ENCODE measurements at regions of chr10 and their contacts with region 1.

Region 1: GRCh38 chr10:31083765-31084184 is 52.1 kb upstream of the ZNF438 start:
- DNase-seq: no peak
- ATAC-seq: peak; percentile 64
- H3K4me3 Mint-ChIP-seq: no peak overlapping the region
- H3K27ac Mint-ChIP-seq: no peak overlapping the region
- H3K4me1 Mint-ChIP-seq: no peaks in the 10 kb centered on the region
- H3K27me3 Mint-ChIP-seq: peaks cover 5% of the 10 kb centered on the region
- CTCF ChIP-seq: no peak

Region 2: DNA sequence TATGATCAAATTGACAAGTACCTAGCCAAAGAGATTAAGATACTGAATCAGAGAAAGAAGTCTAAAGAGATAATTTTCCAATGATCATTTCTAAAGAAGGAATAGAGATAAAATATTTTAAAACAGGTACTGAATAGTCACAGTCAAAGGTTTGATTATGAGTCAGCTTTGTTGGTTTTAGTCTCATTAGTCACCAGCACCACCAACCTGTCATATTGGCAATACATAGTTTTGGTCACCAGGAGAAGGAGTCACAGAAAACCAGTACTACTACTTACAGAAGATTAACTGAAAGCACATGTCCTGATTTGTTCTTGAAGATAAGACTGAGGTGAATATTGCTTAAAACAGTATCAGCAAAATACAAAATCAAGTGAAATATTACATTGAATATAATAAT is 269.8 kb after region 1 on chr10:
- CTCF ChIA-PET with region 1: interaction called, 4 read pairs
- POLR2A ChIA-PET with region 1: no interaction called
- intact Hi-C with region 1: loop called (anchors 1 kb)
- DNase-seq: no peak
- ATAC-seq: peak; percentile 81
- H3K4me3 Mint-ChIP-seq: no peak overlapping the region
- H3K27ac Mint-ChIP-seq: no peak overlapping the region
- H3K4me1 Mint-ChIP-seq: peaks cover 47% of the 10 kb centered on the region
- H3K27me3 Mint-ChIP-seq: no peaks in the 10 kb centered on the region
- CTCF ChIP-seq: no peak

Region 3: DNA sequence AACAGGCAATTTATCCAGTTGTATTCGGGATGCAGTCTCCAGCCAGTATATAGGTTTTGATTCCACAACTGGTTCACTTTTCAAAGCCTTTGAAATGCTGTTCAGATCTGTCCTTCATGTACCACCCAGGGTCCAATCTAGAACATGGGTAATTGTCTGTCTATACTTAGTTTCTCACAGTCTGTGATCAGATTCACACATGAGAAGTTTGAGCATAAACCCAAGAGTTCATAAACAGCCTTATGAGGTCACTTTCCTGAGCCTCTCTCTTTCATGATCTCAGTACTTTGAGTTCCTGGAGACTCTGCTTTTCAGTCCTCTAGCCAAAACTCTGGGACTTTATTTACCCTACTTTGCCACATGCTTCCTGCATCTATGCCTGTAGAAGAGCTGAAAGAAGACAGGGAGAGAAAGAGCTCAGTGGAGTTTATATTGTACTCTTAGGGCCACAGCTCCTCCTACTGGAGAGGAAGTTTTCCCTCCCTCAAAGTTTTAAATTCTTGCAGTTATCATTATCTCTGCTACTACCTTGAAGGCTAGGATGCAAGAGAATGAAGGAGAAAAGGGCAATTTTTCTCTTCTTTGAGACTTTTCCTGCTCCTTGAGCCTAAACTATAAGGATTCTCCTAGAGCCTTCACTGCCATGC is 407.2 kb after region 1 on chr10:
- CTCF ChIA-PET with region 1: no interaction called
- POLR2A ChIA-PET with region 1: no interaction called
- intact Hi-C with region 1: loop called (anchors 1 kb)
- DNase-seq: no peak
- ATAC-seq: peak; percentile 45
- H3K4me3 Mint-ChIP-seq: no peak overlapping the region
- H3K27ac Mint-ChIP-seq: no peak overlapping the region
- H3K4me1 Mint-ChIP-seq: no peaks in the 10 kb centered on the region
- H3K27me3 Mint-ChIP-seq: no peaks in the 10 kb centered on the region
- CTCF ChIP-seq: no peak

Region 4: GRCh38 chr10:31770307-31770902 is 686.6 kb after region 1 on chr10:
- CTCF ChIA-PET with region 1: interaction called, 9 read pairs
- POLR2A ChIA-PET with region 1: no interaction called
- intact Hi-C with region 1: loop called (anchors 1 kb)
- DNase-seq: no peak
- ATAC-seq: peak; percentile 96
- H3K4me3 Mint-ChIP-seq: no peak overlapping the region
- H3K27ac Mint-ChIP-seq: no peak overlapping the region
- H3K4me1 Mint-ChIP-seq: no peaks in the 10 kb centered on the region
- H3K27me3 Mint-ChIP-seq: no peaks in the 10 kb centered on the region
- CTCF ChIP-seq: peak; percentile 53

Region 5: DNA sequence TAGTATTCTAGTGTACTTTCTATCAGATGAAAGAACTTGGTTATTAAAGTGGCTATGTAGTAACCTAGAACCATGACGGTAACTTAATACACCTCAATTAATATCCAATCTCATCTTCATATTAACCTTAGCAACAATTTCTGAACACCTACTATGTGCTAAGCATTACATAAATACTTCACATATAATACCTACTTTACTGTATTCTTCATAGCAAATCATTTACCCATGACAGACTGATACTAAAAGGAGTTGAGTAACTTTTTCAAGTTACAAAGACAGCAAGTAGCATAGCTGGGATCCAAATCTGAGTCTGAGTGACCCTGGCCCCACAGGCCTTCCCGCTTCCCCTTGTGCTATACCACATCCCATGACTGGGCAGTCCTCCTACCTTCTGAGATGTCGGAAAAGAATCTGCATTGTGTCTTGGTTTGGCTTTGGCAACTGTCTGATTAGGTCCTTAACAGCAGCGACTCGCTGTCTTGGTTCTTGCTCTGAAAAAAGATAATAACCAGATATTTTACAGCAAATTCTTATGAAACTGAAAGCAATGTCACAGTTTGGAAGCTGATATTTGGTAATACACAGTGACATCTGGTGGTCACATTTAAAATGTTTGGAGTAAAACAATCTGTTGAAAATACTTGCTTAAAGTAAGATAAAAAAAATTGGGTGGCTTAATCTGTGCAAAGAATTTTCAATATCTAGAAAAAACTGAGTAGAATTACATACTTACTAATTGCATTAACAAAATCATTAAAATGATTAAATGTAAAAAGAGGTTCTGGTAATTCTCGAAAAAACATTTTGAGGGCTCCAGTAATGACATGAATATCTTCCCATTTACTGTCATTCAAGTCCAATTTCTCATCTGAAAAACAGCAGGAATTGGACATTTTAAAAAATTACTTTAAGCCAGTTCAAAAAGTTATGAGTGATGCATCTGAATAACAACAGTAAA is 724.8 kb after region 1 on chr10:
- CTCF ChIA-PET with region 1: interaction called, 3 read pairs
- POLR2A ChIA-PET with region 1: no interaction called
- intact Hi-C with region 1: loop called (anchors 1 kb)
- DNase-seq: no peak
- ATAC-seq: no peak
- H3K4me3 Mint-ChIP-seq: no peak overlapping the region
- H3K27ac Mint-ChIP-seq: peak overlapping the region; percentile 6
- H3K4me1 Mint-ChIP-seq: peaks cover 7% of the 10 kb centered on the region
- H3K27me3 Mint-ChIP-seq: no peaks in the 10 kb centered on the region
- CTCF ChIP-seq: no peak

Measured in activated B cell treated with CpG ODN at 0.5 μM for 24 hours (primary cell).